HEK293T (cell line): ENCODE measurements at regions of chr15 and their contacts with region 1.

Region 1: DNA sequence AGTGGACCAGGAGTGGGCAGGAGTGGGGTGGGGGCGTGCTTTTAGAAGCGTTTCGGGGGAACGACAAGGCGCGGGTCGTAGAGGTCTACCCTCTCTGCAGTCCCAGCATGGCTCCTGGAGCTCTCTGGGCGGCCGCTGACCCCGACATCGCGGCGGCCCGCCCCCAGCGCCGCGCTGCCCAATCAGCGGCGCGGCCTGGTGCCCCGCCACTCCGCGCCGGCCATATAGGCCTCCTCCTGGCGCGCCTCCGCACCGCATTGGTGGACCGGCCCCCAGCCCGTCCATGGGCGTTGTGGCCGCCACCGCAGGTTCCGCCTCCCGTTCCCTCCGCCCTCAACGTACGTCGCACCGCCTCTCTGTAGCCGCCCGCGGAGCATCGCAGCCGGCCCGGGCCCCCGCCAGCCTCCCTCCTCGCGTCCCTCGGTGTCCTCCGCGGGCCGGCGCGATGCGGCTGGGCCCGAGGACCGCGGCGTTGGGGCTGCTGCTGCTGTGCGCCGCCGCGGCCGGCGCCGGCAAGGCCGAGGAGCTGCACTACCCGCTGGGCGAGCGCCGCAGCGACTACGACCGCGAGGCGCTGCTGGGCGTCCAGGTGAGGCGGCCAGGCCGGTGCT is at the start of gene RCN2:
- DNase-seq: peak; percentile 96

Region 2: DNA sequence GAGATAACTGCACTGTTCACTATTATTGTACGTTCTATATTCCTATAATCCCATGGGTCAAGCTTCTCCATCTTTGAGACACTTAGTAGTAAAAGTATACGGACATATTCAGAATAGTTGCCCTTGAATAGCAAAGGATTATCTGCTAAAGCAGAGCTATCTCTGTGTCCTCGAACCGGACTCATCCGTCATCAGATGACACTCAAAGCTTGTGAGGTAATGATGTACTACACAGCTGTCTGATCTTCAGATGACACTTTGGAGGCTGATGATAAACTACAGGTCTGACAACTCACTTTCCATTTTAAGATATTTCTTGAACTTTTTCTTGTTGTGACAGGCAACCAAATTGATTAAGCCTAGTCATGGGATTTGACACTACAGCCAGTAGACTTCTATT is 266.6 kb before region 1 on chr15:
- CTCF ChIA-PET with region 1: no interaction called
- POLR2A ChIA-PET with region 1: no interaction called
- DNase-seq: no peak

Region 3: DNA sequence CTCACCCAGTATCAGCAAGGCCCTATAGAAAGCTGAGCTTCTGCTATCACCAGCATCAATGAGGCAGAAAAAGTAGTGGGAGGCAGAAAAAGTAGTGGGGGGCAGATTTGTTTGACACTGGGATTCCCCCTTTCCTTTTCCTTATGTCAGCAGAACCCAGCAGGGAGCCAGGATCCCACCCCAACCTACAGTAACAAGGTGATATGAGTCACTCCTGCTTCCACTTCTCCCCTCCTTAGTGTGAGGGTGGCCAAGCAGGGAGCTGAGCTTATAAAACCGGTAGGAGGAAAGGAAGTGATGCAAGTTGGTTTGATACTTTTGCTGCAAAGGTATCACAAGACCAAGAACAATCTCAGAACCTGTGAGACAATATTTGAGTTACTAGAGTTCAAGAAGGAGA is 155.0 kb before region 1 on chr15:
- CTCF ChIA-PET with region 1: no interaction called
- POLR2A ChIA-PET with region 1: no interaction called
- DNase-seq: no peak

Region 4: GRCh38 chr15:76815401-76815800 is 116.1 kb before region 1 on chr15:
- CTCF ChIA-PET with region 1: no interaction called
- POLR2A ChIA-PET with region 1: no interaction called
- DNase-seq: no peak

Region 5: DNA sequence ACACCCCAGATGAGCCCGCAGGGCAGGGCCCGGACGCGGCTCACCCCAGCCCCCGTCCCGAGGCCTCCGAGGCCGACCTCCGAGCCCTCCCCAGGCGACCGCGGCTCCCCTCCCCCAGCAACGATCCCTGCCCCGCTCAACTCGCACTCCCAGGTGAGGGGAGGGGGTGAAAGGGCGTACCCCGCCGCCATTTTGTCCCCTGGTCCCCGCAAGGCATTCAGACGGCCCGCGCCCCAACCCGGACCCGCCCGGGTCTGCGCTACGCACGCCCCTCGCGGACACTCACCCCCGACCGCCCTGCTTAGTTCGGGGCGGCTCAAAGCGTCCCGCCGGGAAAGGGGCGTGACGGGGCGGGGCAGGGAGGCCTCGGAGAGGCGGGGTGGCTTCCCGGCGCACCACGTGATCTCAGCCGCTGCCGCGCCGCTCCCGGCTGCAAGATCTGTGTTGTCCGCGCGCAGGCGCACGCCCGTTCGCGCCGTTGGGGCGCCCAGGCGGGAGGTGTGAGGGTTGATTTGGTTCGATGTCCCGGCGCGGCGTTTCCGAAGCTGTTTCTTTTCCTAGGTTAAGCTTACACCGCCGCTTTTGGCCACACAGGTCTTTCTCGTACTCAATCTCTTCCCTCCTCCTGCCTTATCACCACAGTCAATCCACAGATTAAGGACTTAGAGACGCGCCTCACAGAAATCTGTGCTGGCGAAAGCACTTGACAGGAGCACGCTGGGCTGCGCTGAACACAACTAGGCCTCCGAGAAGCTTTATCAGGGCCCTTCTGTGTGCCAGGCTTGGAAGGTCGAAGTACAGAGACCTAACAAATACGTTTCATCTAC is 26.3 kb before region 1 on chr15 and contains the start of gene SCAPER:
- CTCF ChIA-PET with region 1: no interaction called
- POLR2A ChIA-PET with region 1: interaction called, 39 read pairs
- DNase-seq: peak; percentile 98

Region 6: GRCh38 chr15:76916369-76916768 is 15.1 kb before region 1 on chr15:
- CTCF ChIA-PET with region 1: no interaction called
- POLR2A ChIA-PET with region 1: interaction called, 17 read pairs
- DNase-seq: no peak

Region 7: DNA sequence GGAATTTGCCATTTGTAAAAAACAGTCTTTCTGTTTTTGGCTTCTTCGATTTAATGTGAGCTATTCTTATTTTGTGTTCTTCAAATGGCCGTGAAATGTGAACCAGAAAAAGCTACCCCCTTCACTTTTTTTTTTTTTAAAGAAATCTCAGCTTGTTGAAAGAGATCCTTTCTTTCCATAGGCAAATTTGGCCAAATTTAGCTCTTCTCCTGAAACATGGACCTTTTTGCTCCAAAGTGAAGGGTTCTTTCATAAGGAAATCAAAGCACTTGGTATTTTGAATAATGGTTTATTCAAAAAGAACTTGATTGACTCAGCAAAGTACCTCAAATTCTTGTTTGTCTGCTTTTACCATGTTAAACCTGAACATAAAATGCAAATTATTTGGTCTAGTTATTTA is 10.1 kb after region 1 on chr15:
- CTCF ChIA-PET with region 1: no interaction called
- POLR2A ChIA-PET with region 1: interaction called, 20 read pairs
- DNase-seq: no peak

Region 8: GRCh38 chr15:76947454-76947853 is 16.0 kb after region 1 on chr15:
- CTCF ChIA-PET with region 1: no interaction called
- POLR2A ChIA-PET with region 1: interaction called, 20 read pairs
- DNase-seq: no peak

Region 9: DNA sequence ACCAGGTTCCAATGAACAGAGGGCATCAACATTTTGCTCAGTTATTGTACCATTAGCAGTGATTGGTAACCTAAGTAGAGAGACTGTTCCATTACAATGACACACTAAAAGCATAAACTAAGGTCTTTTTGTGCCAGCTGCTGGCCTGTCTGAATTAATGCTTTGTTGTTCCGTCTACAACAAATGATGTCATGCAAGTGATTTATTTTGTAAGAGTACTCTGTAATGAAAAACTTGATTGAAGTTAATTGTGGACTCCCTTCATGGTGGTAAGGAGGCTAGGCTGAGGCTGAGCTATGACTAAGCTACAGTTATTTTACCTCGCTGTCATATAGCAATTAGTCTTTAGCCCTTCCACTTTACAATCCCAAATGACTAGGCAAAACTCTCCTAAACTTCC is 23.2 kb after region 1 on chr15:
- CTCF ChIA-PET with region 1: no interaction called
- POLR2A ChIA-PET with region 1: interaction called, 22 read pairs
- DNase-seq: no peak

Region 10: GRCh38 chr15:76963596-76963995 is 32.1 kb after region 1 on chr15:
- CTCF ChIA-PET with region 1: interaction called, 4 read pairs
- POLR2A ChIA-PET with region 1: interaction called, 22 read pairs
- DNase-seq: no peak

Region 11: DNA sequence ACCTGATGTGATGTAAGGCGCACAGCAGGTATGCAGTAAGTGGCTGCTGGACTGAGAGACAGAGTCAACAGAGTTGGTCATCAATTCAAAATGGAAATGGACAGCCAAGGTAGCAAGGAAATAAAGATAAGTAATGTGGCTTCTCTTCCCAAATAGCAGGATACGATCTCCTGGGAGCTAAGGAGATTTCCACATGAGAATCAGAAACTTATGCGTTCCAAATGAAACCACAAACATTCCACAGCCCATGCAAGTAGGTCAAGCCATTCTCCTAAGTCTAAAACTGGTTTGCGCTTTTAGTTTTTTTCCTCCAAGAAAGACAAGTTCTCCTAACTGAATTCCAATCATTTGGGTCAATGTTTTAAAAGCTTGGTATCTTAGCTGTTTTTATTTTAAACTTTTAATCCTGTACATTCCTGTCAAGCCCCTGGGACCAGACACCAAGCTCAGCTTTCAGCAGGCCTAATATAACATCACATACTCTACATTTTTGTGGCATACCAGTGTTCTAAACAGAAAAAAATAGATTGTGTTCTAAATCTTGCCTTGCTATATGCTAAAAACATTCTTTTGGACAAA is 213.1 kb after region 1 on chr15:
- CTCF ChIA-PET with region 1: no interaction called
- POLR2A ChIA-PET with region 1: no interaction called
- DNase-seq: no peak